Psoas muscle (tissue), 8 donors: ENCODE measurements at regions of chr7 and their contacts with region 1.

Region 1: DNA sequence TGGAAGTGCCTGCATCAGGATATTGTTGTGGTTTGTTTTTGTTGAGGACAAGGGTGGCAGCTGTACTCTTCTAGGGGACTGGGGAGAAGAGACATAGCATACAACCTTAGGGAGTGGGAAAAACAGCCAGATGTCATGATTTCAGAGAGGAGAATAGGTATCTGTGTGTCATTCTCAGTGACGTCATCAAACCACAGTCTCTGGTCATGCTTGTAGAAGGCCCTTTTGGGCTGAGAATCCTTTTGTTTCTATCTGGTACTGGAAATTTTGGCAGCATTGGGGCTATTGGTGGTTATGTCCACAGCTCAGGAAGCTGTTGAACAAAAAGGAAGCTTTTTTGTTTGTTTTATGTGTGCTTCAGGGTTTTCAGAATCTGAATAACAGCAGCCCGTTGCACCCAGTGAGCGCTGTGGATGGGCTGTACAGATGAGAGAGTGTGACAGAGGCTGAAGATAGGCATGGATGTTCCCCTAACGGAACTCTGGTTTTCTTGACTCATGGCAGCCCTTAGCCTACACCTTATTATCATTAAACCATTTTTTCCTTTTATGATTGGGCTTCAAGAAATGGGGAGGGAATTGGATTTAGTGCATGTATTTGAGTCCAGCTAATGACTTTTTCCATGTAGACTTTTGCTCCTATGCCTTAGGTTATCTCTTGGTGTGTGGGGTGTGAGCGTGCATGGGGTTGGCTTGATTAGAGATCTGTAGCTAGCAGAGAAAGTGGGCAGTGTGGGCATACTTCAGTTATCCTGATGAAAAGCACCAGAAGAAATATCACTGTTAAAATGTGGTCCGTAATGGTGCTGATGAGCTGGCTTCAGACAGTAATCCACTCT is 65.7 kb downstream of the SND1 start:
- DNase-seq: no peak
- ATAC-seq: no peak
- H3K4me3 ChIP-seq: no peak overlapping the region
- H3K27ac ChIP-seq: no peak overlapping the region
- H3K4me1 ChIP-seq: no peaks in the 10 kb centered on the region
- H3K27me3 ChIP-seq: no peaks in the 10 kb centered on the region
- CTCF ChIP-seq: no peak

Region 2: GRCh38 chr7:127766831-127767459 is 49.2 kb after region 1 on chr7:
- intact Hi-C with region 1: no loop called
- DNase-seq: no peak
- ATAC-seq: no peak
- H3K4me3 ChIP-seq: no peak overlapping the region
- H3K27ac ChIP-seq: no peak overlapping the region
- H3K4me1 ChIP-seq: no peaks in the 10 kb centered on the region
- H3K27me3 ChIP-seq: no peaks in the 10 kb centered on the region
- CTCF ChIP-seq: no peak

Region 3: GRCh38 chr7:127792528-127793342 is 75.0 kb after region 1 on chr7:
- intact Hi-C with region 1: no loop called
- DNase-seq: no peak
- ATAC-seq: peak in 2 of 4 donors; percentile 54 to 56
- H3K4me3 ChIP-seq: no peak overlapping the region
- H3K27ac ChIP-seq: no peak overlapping the region
- H3K4me1 ChIP-seq: peaks cover 8% of the 10 kb centered on the region
- H3K27me3 ChIP-seq: no peaks in the 10 kb centered on the region
- CTCF ChIP-seq: peak; percentile 38

Region 4: GRCh38 chr7:127938588-127938987 is 220.9 kb after region 1 on chr7:
- intact Hi-C with region 1: loop called in 1 of 2 experiments (anchors 10 kb)
- DNase-seq: no peak
- ATAC-seq: peak; percentile 74 to 91 (median 82)
- H3K4me3 ChIP-seq: no peak overlapping the region
- H3K27ac ChIP-seq: no peak overlapping the region
- H3K4me1 ChIP-seq: peaks cover 4% of the 10 kb centered on the region
- H3K27me3 ChIP-seq: no peaks in the 10 kb centered on the region
- CTCF ChIP-seq: no peak

Region 5: GRCh38 chr7:128135515-128136214 is 417.9 kb after region 1 on chr7:
- intact Hi-C with region 1: loop called in 1 of 2 experiments (anchors 5 kb)
- DNase-seq: peak; percentile 44 to 62
- ATAC-seq: peak; percentile 93 to 97 (median 94)
- H3K4me3 ChIP-seq: peak overlapping the region; percentile 66
- H3K27ac ChIP-seq: no peak overlapping the region
- H3K4me1 ChIP-seq: peaks cover 5% of the 10 kb centered on the region
- H3K27me3 ChIP-seq: peaks cover 0 to 71% (median 12%) of the 10 kb centered on the region in 3 donors
- CTCF ChIP-seq: peak; percentile 95